IMR-90 (cell line): ENCODE measurements at regions of chr10 and their contacts with region 1.

Region 1: DNA sequence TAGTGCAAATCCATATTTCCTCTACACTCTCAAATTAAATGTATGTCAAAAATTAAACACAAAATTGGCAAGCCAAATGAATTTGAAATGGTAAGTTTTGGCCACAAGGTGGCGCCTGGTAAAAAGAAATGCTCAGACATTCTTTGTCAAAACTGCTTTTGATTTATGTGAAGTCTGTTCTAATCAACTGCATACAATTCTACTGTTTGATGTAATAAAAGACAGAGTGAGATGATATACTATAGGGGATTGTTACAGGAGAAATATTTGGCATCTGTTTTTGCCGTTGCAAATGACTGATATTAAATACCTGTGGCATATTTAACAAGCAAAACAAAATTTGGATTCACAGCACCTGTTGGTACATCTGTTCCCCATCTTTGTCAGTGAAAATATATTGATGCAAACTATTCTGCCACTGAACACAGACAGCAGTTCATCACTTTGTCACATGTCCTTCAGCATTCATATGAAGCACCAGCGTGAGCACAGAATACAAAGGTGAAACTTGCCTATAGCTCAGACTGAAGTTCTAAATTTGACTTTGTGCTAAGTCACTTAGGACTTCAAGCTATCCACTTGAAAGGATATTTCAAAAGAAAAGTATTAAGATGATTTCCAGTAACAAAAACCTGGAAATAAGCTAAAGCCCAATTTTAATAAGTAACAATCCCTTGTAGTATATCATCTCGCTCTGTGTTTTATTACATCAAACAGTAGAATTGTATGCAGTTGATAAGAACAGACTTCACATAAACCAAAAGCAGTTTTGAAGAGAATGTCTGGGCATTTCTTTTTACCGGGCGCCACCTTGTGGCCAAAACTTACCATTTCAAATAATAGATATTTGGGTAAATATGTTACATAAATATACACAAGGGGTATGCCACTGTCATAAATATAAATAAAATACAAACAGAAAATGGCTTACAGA is 10.2 kb upstream of the CH25H start:
- DNase-seq: peak; percentile 74
- ATAC-seq: peak; percentile 79
- H3K4me3 ChIP-seq: no peak overlapping the region
- H3K27ac ChIP-seq: no peak overlapping the region
- H3K4me1 ChIP-seq: no peaks in the 10 kb centered on the region
- H3K27me3 ChIP-seq: no peaks in the 10 kb centered on the region
- CTCF ChIP-seq: peak; percentile 78
- POLR2A ChIP-seq: no peak
- RAD21 ChIP-seq: peak; percentile 69

Region 2: DNA sequence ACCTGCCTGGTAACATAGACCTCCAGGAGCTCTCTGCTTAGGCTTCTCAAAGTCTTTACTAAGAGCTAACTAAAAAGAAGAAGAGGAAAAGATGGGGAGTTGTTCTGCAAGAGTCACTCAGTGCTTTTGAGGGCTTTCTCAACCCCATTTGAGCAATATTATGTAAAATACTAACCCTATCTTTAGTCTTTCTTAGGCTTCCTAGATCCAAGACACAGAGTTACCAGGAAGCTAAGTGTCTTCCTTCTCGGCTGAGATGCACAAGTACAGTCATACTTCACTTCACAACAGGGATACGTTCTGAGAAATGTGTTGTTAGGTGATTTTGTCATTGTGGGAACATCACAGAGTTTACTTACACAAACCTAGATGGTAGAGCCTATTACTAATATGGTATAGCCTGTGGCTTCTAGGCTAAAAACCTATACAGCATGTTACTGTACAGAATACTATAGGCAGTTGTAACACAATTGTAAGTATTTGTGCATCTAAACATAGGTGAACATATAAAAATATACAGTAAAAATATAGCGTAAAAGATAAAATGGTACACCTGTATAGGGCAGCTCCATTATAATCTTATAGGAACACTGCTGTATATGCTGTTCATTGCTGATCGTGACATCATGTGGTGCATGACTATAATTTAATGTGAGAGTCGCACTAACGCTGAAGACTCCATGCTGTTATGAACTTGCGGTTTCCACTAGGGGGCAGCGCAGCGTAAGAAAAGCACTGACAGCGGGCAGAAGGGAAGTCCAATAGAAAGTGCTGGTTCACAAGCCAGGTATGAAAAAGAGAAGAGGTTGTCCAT is 382.0 kb before region 1 on chr10:
- CTCF ChIA-PET with region 1: no interaction called
- POLR2A ChIA-PET with region 1: no interaction called
- dilution Hi-C with region 1: no loop called
- in situ Hi-C with region 1: loop called (anchors 10 kb)
- intact Hi-C with region 1: loop called (anchors 1 kb)
- DNase-seq: peak; percentile 89
- ATAC-seq: peak; percentile 98
- H3K4me3 ChIP-seq: no peak overlapping the region
- H3K27ac ChIP-seq: no peak overlapping the region
- H3K4me1 ChIP-seq: no peaks in the 10 kb centered on the region
- H3K27me3 ChIP-seq: no peaks in the 10 kb centered on the region
- CTCF ChIP-seq: peak; percentile 96
- POLR2A ChIP-seq: peak; percentile 38
- RAD21 ChIP-seq: peak; percentile 99

Region 3: GRCh38 chr10:88944813-88945212 is 272.5 kb before region 1 on chr10:
- CTCF ChIA-PET with region 1: interaction called, 4 read pairs
- POLR2A ChIA-PET with region 1: no interaction called
- dilution Hi-C with region 1: no loop called
- in situ Hi-C with region 1: loop called (anchors 5 kb)
- intact Hi-C with region 1: no loop called
- DNase-seq: no peak
- ATAC-seq: no peak
- H3K4me3 ChIP-seq: no peak overlapping the region
- H3K27ac ChIP-seq: no peak overlapping the region
- H3K4me1 ChIP-seq: peaks cover 5% of the 10 kb centered on the region
- H3K27me3 ChIP-seq: no peaks in the 10 kb centered on the region
- CTCF ChIP-seq: no peak
- POLR2A ChIP-seq: no peak
- RAD21 ChIP-seq: no peak

Region 4: DNA sequence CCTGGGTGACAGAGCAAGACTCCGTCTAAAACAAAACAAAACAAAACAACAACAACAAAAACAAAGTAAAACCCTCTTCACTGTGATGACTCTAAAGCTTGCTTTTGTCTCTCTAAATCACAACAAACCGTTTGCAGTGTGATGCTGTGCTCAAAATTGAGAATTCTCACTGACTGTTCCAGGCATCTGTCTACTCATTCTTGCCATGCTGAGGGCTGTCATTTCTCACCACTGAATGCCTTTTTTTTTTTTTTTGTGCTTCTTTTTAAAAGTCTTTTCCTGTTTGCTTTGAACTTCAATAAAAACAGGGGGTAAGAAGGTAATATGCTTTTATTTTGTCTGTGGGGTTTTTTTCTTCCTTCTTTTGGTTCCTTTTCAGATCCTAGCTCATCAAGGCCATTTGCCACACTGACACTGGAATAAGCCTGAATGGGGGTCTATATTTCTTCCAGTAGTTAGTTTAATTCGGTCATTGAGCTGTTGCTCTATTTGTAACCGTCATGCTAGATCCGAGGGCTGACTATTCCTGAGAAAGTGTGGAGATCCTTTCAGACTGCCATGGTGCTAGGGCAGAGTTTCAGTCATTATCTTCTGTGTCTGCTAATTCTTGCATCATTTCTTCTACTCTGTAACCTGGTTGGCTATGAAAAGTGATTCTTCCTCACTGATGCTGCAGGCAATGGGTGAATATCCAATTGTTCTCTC is 216.1 kb before region 1 on chr10:
- CTCF ChIA-PET with region 1: interaction called, 3 read pairs
- POLR2A ChIA-PET with region 1: no interaction called
- dilution Hi-C with region 1: loop called (anchors 25 kb)
- in situ Hi-C with region 1: no loop called
- intact Hi-C with region 1: no loop called
- DNase-seq: no peak
- ATAC-seq: peak; percentile 53
- H3K4me3 ChIP-seq: no peak overlapping the region
- H3K27ac ChIP-seq: peak overlapping the region; percentile 39; the same call in 1 of the 2 replicates
- H3K4me1 ChIP-seq: peaks cover 11% of the 10 kb centered on the region
- H3K27me3 ChIP-seq: no peaks in the 10 kb centered on the region
- CTCF ChIP-seq: no peak
- POLR2A ChIP-seq: no peak
- RAD21 ChIP-seq: no peak

Region 5: DNA sequence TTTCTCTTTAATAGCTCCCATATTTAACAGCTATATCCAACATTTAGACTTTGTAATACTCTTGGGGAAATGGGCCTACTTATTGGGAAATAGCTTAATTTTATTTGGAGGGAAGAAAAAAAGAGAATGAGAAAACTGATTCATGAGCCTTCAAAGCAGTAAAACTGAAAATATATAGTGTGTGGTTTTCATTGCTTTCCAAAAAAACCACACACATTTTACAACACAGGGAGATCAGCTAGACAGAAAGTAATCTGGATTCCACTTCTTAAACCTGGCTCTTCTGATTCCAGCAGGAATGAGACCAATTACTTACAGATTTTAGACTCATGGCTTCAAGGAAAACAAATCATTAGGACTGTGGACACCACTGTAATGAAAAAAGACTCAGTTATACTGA is 58.9 kb before region 1 on chr10:
- CTCF ChIA-PET with region 1: no interaction called
- POLR2A ChIA-PET with region 1: no interaction called
- dilution Hi-C with region 1: no loop called
- in situ Hi-C with region 1: no loop called
- intact Hi-C with region 1: no loop called
- DNase-seq: peak; percentile 31
- ATAC-seq: no peak
- H3K4me3 ChIP-seq: no peak overlapping the region
- H3K27ac ChIP-seq: no peak overlapping the region
- H3K4me1 ChIP-seq: no peaks in the 10 kb centered on the region; the same call in 1 of the 2 replicates
- H3K27me3 ChIP-seq: no peaks in the 10 kb centered on the region; the same call in 1 of the 2 replicates
- CTCF ChIP-seq: no peak
- POLR2A ChIP-seq: no peak
- RAD21 ChIP-seq: no peak

Region 6: DNA sequence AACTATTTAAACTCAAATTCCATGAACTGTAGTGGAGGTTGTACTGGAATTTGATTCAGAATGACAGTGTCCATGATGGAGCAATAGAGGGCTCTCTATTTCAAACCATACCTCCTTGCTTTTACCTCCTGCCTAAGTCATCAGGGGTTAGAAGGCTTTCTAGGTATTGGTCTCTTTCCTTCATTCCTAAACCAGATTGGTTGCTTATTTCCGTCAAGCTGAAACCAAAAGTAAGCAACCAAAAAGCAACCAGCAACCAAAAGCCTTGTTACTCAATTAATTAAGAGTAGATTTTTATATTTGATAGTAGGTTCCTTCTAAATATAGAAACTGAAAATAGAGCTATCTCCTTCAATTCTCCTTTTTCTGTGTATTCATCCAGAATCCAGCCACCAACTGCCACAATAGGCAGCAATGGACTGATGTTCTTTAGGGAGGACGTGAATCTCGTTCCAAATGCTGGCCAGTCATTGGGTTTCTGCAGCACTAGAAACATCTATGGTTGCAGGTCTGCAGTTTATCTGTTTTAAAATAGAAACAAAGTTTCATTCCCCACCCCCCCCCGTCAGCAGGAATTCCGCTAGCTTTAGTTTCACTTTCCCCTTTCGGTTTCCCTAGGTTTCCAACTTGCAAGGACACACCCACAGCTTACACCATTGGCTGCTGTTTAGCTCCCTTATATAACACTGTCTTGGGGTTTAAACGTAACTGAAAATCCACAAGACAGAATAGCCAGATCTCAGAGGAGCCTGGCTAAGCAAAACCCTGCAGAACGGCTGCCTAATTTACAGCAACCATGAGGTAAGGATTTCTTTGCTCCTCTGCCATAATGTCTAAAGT is 174.8 kb after region 1 on chr10 and contains the start of gene IFIT1:
- CTCF ChIA-PET with region 1: no interaction called
- POLR2A ChIA-PET with region 1: no interaction called
- dilution Hi-C with region 1: no loop called
- in situ Hi-C with region 1: no loop called
- intact Hi-C with region 1: loop called (anchors 2 kb)
- DNase-seq: peak; percentile 95
- ATAC-seq: peak; percentile 94
- H3K4me3 ChIP-seq: peak within 1 kb of the TSS; percentile 68
- H3K27ac ChIP-seq: peak within 1 kb of the TSS; percentile 87
- H3K4me1 ChIP-seq: no peaks in the 10 kb centered on the region; the same call in 1 of the 2 replicates
- H3K27me3 ChIP-seq: no peaks in the 10 kb centered on the region
- CTCF ChIP-seq: no peak
- POLR2A ChIP-seq: no peak
- RAD21 ChIP-seq: no peak
- total RNA-seq, gene IFIT1: 6.8 and 7.5 TPM in 2 replicates